GM13977 (cell line): ENCODE measurements at regions of chr2 and their contacts with region 1.

Region 1: GRCh38 chr2:117846737-117847136 is 32.2 kb downstream of the DDX18 start:
- DNase-seq: no peak
- CTCF ChIP-seq: no peak

Region 2: DNA sequence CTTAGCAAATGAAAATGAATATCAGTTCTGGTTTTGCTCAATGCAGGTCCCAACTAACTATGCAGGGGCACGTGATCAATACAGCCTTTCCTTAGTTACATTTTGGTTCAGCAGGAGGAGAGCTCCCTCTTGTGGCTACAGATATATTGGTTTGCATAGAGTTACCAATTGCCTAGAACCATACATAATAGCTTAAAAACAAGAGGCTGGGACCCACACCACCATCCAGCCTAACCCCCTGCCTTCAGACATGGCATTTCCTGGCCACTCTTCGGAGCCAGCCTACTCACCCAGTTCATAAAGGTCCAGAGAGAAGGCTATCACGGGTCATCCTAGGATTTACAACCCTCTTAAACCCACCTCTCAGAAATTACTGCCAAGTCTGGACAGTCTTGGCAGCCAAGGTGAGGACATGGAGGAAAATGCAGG is 156.7 kb after region 1 on chr2:
- in situ Hi-C with region 1: loop called (anchors 10 kb)
- DNase-seq: peak; percentile 62
- CTCF ChIP-seq: peak; percentile 79